ENCODE measurements at regions of chr10 and their contacts with region 1.

Region 1: GRCh38 chr10:98006266-98006665 is 24.2 kb downstream of the CRTAC1 start:
- DNase-seq: peak; percentile 30 to 61 (median 48)
- ATAC-seq: peak; percentile 89
- H3K4me3 ChIP-seq: no peak overlapping the region
- H3K27ac ChIP-seq: no peak overlapping the region
- H3K4me1 ChIP-seq: peaks cover 0 to 8% of the 10 kb centered on the region in 2 experiments; a peak in 2 of 5 replicates
- H3K27me3 ChIP-seq: peaks cover 0 to 12% of the 10 kb centered on the region in 2 experiments; a peak in 2 of 5 replicates
- CTCF ChIP-seq: no peak
- EP300 ChIP-seq: no peak
- POLR2A ChIP-seq: no peak
- RAD21 ChIP-seq: no peak

Region 2: GRCh38 chr10:96339957-96340904 is 1666.0 kb before region 1 on chr10:
- CTCF ChIA-PET with region 1: no interaction called
- POLR2A ChIA-PET with region 1: no interaction called
- in situ Hi-C with region 1: loop called (anchors 10 kb)
- intact Hi-C with region 1: no loop called
- DNase-seq: peak; percentile 44 to 68 (median 49)
- ATAC-seq: peak; percentile 89
- H3K4me3 ChIP-seq: no peak overlapping the region
- H3K27ac ChIP-seq: no peak overlapping the region
- H3K4me1 ChIP-seq: no peaks in the 10 kb centered on the region
- H3K27me3 ChIP-seq: no peaks in the 10 kb centered on the region; a peak in 1 of 5 replicates
- CTCF ChIP-seq: peak; percentile 72 to 78 (median 75)
- EP300 ChIP-seq: no peak
- POLR2A ChIP-seq: no peak
- RAD21 ChIP-seq: peak; percentile 32 to 53

Region 3: GRCh38 chr10:97096261-97097083 is 909.8 kb before region 1 on chr10:
- CTCF ChIA-PET with region 1: no interaction called
- POLR2A ChIA-PET with region 1: no interaction called
- in situ Hi-C with region 1: no loop called
- intact Hi-C with region 1: no loop called
- DNase-seq: no peak
- ATAC-seq: no peak
- H3K4me3 ChIP-seq: no peak overlapping the region
- H3K27ac ChIP-seq: no peak overlapping the region
- H3K4me1 ChIP-seq: no peaks in the 10 kb centered on the region
- H3K27me3 ChIP-seq: peaks cover 5 to 45% of the 10 kb centered on the region in 2 experiments; a peak in 3 of 5 replicates
- CTCF ChIP-seq: no peak
- EP300 ChIP-seq: no peak
- POLR2A ChIP-seq: no peak
- RAD21 ChIP-seq: no peak

Region 4: DNA sequence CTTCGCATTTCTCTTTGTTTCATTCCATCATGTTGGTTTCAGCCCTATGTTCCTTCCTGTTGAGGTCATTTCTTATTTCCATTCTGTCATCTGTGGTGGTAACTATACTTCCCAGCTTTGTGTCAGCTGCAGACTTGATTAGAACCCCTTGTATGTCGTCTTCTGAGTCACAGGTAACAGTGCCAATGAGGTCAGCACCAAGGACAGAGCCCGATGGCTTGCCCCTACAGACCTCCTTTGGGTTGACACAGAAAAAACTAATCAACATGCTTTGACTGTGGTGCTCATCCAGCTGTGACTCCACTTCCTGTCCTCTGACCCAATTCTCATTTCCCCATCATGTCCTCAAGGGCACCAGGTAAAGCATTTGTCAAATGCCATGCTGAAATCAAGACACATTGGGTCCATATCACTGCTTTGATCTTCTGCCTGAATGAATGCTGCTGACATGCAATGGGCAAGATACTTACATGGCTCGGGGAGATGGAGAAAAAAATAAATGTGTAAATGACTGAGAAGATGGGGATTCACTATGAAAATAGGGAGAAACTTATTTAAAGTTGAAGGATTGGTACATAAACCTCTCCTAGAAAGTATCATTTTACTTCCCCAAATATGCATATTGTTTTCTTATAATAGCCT is 49.7 kb after region 1 on chr10:
- CTCF ChIA-PET with region 1: no interaction called
- POLR2A ChIA-PET with region 1: no interaction called
- in situ Hi-C with region 1: no loop called
- intact Hi-C with region 1: no loop called
- DNase-seq: peak; percentile 15 to 32 (median 17)
- ATAC-seq: no peak
- H3K4me3 ChIP-seq: no peak overlapping the region
- H3K27ac ChIP-seq: no peak overlapping the region
- H3K4me1 ChIP-seq: no peaks in the 10 kb centered on the region
- H3K27me3 ChIP-seq: peaks cover 0 to 6% of the 10 kb centered on the region in 2 experiments; a peak in 1 of 5 replicates
- CTCF ChIP-seq: no peak
- EP300 ChIP-seq: no peak
- POLR2A ChIP-seq: no peak
- RAD21 ChIP-seq: no peak

Measured in K562 (cell line).